Cardiac septum (tissue), 1 donor: ENCODE measurements at regions of chr14 and their contacts with region 1.

Region 1: GRCh38 chr14:34227834-34228649 is 234.0 kb downstream of the SPTSSA start:
- DNase-seq: peak; percentile 84

Region 2: DNA sequence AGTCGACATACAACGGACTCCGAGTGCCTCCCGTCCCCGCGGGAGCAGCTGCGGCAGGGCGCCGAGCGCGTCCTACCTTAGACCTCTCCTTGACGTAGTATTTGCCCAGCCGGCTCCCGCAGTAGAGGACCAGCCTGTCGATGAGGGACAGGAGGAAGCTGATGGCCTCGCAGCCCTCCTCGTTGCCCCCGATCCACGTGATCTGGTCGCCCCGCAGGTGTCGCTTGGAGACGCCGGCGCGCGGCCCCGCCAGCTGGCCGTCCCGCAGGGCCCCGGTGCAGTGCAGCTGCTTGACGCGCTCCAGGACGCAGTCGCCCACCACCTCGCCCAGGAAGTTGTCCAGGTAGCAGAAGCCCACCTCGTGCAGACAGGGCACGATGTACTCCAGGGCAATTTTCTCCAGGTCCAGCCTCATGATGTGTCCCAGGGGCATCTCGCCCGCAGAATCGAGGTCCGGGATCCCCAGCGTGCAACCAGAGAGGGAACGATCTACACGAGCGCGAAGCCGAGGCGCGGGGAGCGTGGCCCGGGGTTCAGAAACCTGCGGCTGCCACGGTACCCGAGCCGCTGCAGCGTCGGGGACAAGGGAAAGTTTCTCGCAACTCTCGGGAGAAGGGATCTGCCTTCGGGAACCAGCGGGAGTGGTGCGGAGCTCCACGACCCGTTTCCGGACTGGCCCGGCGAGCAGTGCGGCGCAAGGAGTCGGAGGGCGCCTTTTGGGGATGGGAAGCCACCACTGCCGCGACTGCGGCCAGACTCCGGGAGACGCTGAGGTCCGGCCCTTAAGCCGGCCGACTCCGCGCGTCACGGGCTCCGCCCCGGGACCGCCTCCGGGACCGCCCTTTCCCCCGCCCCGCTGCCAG is 277.5 kb before region 1 on chr14 and contains the start of gene EGLN3:
- intact Hi-C with region 1: loop called (anchors 5 kb)
- DNase-seq: peak; percentile 95
- total RNA-seq, gene EGLN3: 326 TPM

Region 3: DNA sequence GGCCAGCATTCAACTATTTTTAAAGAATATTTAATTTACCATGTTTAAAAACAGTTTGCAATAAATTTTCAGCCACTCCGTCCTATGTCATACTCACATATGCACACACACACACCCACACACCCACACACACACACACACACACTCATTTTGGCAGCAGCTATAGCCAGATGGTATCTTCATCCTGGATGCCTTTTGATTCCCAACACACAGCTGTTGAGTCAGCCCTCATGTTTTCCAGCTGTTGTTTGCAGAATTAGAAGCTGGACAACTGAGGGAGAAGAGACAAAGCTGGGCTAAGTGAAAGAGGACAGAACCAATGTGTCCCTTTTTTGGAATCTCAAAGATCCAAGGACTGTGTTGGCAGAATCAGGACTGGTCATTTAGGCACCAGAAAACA is 197.2 kb before region 1 on chr14:
- intact Hi-C with region 1: loop called (anchors 10 kb)
- DNase-seq: no peak

Region 4: DNA sequence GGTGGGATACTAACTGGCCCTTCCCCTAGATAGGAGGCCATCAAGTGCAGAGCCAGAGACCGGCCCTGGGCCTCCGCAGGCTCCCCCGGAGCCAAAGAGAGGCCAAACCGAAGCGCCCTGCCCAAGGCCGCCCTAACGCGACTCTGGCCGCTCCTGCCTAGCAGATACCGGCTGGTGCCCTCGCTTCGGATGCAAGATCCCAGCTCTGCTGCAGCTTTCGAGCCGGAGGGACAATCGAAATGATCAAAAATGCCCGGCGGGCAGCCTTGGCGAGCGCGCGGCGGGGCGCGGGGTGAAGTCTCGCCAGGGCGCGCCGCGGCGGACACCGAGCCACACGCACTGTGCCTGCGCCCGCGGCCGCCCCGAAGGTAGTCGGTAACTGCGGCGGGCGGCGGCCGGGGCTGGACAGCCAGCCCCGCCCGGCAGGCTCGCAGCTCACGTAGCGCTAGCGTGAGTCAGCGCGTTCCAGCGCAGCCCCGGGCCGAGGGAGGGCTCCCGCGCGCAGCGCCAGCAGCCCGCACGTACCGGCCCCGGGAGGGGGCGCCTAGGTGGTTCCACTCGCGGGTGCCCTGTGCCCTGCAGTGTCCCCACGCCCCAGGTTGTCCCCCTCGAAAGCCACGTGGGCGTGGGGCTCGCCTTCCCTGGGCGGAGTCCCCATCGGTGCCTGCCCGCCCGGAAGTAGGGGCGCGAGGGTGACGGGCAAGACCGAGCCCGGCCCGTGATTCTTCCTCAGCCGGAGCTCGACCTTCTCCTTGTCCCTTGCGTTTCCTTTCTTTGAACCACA is 168.0 kb before region 1 on chr14:
- intact Hi-C with region 1: loop called (anchors 5 kb)
- DNase-seq: peak; percentile 91

Region 5: GRCh38 chr14:34098045-34098984 is 129.7 kb before region 1 on chr14:
- intact Hi-C with region 1: loop called (anchors 5 kb)
- DNase-seq: no peak

Region 6: GRCh38 chr14:34300882-34301734 is 73.1 kb after region 1 on chr14:
- intact Hi-C with region 1: loop called (anchors 5 kb)
- DNase-seq: no peak